Esophagus muscularis mucosa (tissue), 4 donors: ENCODE measurements at regions of chr2 and their contacts with region 1.

Region 1: GRCh38 chr2:64523666-64524603 is at the start of gene AFTPH:
- DNase-seq: peak; percentile 99
- H3K4me3 ChIP-seq: peak within 1 kb of the TSS; percentile 82 to 96 (median 94)
- H3K27ac ChIP-seq: peak within 1 kb of the TSS; percentile 96 to 97 (median 97)
- H3K4me1 ChIP-seq: peaks cover 22 to 45% (median 41%) of the 10 kb centered on the region in 4 donors
- H3K27me3 ChIP-seq: no peaks in the 10 kb centered on the region
- CTCF ChIP-seq: peak in 2 of 3 experiments; percentile 4 to 30
- EP300 ChIP-seq: no peak
- POLR2A ChIP-seq: peak; percentile 87
- total RNA-seq, gene AFTPH: 27.5 to 36.1 (median 35.7) TPM

Region 2: DNA sequence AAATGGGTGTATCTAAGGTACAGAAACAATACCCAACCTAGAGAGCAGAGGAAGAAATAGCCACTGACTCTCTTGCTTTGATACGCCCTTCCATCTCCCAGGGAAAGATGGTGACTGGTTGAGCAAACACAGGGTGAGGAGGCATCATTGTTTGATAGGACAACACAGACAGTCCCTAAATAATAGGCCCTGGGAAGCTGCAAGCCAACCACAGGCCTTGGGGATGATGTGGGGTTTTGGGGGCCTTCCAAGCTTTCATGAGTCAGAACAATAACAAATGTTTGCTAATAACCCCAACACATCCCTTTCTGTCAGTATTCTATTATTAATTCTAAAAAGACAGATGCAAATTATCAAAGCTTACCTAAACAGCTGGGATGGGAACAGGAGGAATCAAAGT is 60.2 kb before region 1 on chr2:
- intact Hi-C with region 1: no loop called
- DNase-seq: no peak
- H3K4me3 ChIP-seq: no peak overlapping the region
- H3K27ac ChIP-seq: no peak overlapping the region
- H3K4me1 ChIP-seq: no peaks in the 10 kb centered on the region
- H3K27me3 ChIP-seq: no peaks in the 10 kb centered on the region
- CTCF ChIP-seq: no peak
- EP300 ChIP-seq: no peak
- POLR2A ChIP-seq: no peak

Region 3: GRCh38 chr2:64562148-64562784 is 38.3 kb after region 1 on chr2:
- intact Hi-C with region 1: loop called (anchors 5 kb)
- DNase-seq: no peak
- H3K4me3 ChIP-seq: no peak overlapping the region
- H3K27ac ChIP-seq: no peak overlapping the region
- H3K4me1 ChIP-seq: peaks cover 0 to 4% (median 0%) of the 10 kb centered on the region in 4 donors
- H3K27me3 ChIP-seq: no peaks in the 10 kb centered on the region
- CTCF ChIP-seq: peak; percentile 29 to 44 (median 39)
- EP300 ChIP-seq: no peak
- POLR2A ChIP-seq: no peak

Region 4: GRCh38 chr2:64644177-64645004 is 120.5 kb after region 1 on chr2:
- intact Hi-C with region 1: loop called (anchors 10 kb)
- DNase-seq: no peak
- H3K4me3 ChIP-seq: peak overlapping the region; percentile 51 to 58 (median 53)
- H3K27ac ChIP-seq: peak overlapping the region; percentile 87 to 92 (median 89)
- H3K4me1 ChIP-seq: peaks cover 62 to 88% (median 83%) of the 10 kb centered on the region in 4 donors
- H3K27me3 ChIP-seq: no peaks in the 10 kb centered on the region
- CTCF ChIP-seq: no peak
- EP300 ChIP-seq: peak; percentile 13
- POLR2A ChIP-seq: peak; percentile 74

Region 5: GRCh38 chr2:64839844-64840243 is 315.9 kb after region 1 on chr2:
- intact Hi-C with region 1: no loop called
- DNase-seq: no peak
- H3K4me3 ChIP-seq: no peak overlapping the region
- H3K27ac ChIP-seq: peak overlapping the region in 3 of 4 donors; percentile 0 to 46 (median 2)
- H3K4me1 ChIP-seq: peaks cover 0 to 33% (median 21%) of the 10 kb centered on the region in 4 donors
- H3K27me3 ChIP-seq: no peaks in the 10 kb centered on the region
- CTCF ChIP-seq: no peak
- EP300 ChIP-seq: no peak
- POLR2A ChIP-seq: no peak